Ascending aorta (tissue), 2 donors: ENCODE measurements at regions of chr6 and their contacts with region 1.

Region 1: GRCh38 chr6:140833408-140833807 is 1299.3 kb upstream of the GJE1 start:
- DNase-seq: no peak
- H3K4me3 ChIP-seq: no peak overlapping the region
- H3K27ac ChIP-seq: peak overlapping the region; percentile 48 to 74
- H3K4me1 ChIP-seq: peaks cover 5 to 12% of the 10 kb centered on the region in 2 donors
- H3K27me3 ChIP-seq: no peaks in the 10 kb centered on the region
- CTCF ChIP-seq: no peak

Region 2: GRCh38 chr6:140355476-140355875 is 477.9 kb before region 1 on chr6:
- intact Hi-C with region 1: no loop called
- DNase-seq: no peak
- H3K4me3 ChIP-seq: no peak overlapping the region
- H3K27ac ChIP-seq: no peak overlapping the region
- H3K4me1 ChIP-seq: no peaks in the 10 kb centered on the region
- H3K27me3 ChIP-seq: no peaks in the 10 kb centered on the region
- CTCF ChIP-seq: no peak

Region 3: GRCh38 chr6:140774080-140774505 is 59.3 kb before region 1 on chr6:
- intact Hi-C with region 1: no loop called
- DNase-seq: no peak
- H3K4me3 ChIP-seq: no peak overlapping the region
- H3K27ac ChIP-seq: no peak overlapping the region
- H3K4me1 ChIP-seq: peaks cover 0 to 11% of the 10 kb centered on the region in 2 donors
- H3K27me3 ChIP-seq: no peaks in the 10 kb centered on the region
- CTCF ChIP-seq: no peak

Region 4: GRCh38 chr6:140979642-140980091 is 146.3 kb after region 1 on chr6:
- intact Hi-C with region 1: loop called (anchors 10 kb)
- DNase-seq: peak; percentile 9 to 87
- H3K4me3 ChIP-seq: peak overlapping the region; percentile 13 to 29
- H3K27ac ChIP-seq: peak overlapping the region; percentile 76 to 79
- H3K4me1 ChIP-seq: peaks cover 4 to 24% of the 10 kb centered on the region in 2 donors
- H3K27me3 ChIP-seq: no peaks in the 10 kb centered on the region
- CTCF ChIP-seq: no peak